MCF 10A (cell line): ENCODE measurements at regions of chr1 and their contacts with region 1.

Region 1: GRCh38 chr1:225474986-225475820 is 47.4 kb upstream of the LBR start:
- DNase-seq: peak; percentile 85
- H3K4me3 Mint-ChIP-seq: no peak overlapping the region
- H3K27ac Mint-ChIP-seq: no peak overlapping the region
- H3K4me1 Mint-ChIP-seq: no peaks in the 10 kb centered on the region
- H3K27me3 Mint-ChIP-seq: no peaks in the 10 kb centered on the region
- CTCF ChIP-seq: peak; percentile 100

Region 2: GRCh38 chr1:225454733-225455132 is 20.5 kb before region 1 on chr1:
- CTCF ChIA-PET with region 1: interaction called, 78 read pairs
- POLR2A ChIA-PET with region 1: interaction called, 11 read pairs
- intact Hi-C with region 1: no loop called
- DNase-seq: peak; percentile 96
- H3K4me3 Mint-ChIP-seq: peak overlapping the region; percentile 2
- H3K27ac Mint-ChIP-seq: peak overlapping the region; percentile 60
- H3K4me1 Mint-ChIP-seq: peaks cover 61% of the 10 kb centered on the region
- H3K27me3 Mint-ChIP-seq: no peaks in the 10 kb centered on the region
- CTCF ChIP-seq: no peak

Region 3: DNA sequence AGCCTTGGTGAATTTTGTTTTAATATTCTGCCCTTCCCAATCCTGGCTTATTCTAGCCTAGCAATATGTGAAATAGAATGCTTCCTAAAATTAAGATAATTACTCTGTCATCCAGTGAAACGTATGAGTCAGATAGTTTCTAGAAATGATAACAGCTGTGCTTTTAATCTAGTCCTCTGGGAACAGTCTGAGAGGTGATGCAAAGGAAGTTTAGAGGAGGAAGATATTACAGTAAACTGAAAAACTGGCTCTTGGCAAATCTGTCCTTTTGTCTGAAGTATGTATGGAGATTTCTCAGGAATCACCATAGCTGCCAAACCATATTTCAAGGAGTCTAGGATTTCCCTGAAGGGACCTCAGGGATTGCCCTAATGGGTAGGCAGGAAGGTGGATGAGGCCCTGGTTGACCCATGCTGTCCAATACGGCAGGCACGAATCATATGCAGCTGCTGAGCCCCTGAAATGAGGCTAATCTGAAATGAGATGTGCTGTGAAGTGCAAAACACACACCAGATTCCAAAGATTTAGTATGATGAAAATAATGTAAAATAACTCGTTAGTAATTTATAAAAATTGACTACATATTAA is 23.4 kb after region 1 on chr1:
- CTCF ChIA-PET with region 1: interaction called, 37 read pairs
- POLR2A ChIA-PET with region 1: interaction called, 4 read pairs
- intact Hi-C with region 1: no loop called
- DNase-seq: no peak
- H3K4me3 Mint-ChIP-seq: no peak overlapping the region
- H3K27ac Mint-ChIP-seq: no peak overlapping the region
- H3K4me1 Mint-ChIP-seq: no peaks in the 10 kb centered on the region
- H3K27me3 Mint-ChIP-seq: no peaks in the 10 kb centered on the region
- CTCF ChIP-seq: no peak

Region 4: DNA sequence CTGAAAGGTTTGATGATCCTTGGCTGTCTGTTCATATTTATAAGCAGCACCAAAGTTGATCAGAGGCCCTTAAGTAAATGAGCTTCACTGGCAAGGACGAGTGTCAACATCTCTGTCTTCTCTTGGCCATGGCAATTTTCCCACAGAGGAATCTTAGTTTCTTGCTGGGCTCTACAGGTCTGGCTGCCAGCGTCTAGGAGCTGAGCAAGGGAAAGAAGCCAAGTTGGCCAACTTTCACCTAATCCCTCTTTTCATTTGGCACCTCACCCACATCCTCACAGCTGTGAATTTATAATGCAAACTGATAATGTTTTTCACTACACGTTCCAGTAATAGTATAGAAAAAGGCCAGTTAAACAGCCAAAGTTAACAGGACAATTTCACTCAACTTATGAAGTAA is 51.7 kb after region 1 on chr1:
- CTCF ChIA-PET with region 1: interaction called, 11 read pairs
- POLR2A ChIA-PET with region 1: no interaction called
- intact Hi-C with region 1: no loop called
- DNase-seq: peak; percentile 56
- H3K4me3 Mint-ChIP-seq: no peak overlapping the region
- H3K27ac Mint-ChIP-seq: no peak overlapping the region
- H3K4me1 Mint-ChIP-seq: peaks cover 5% of the 10 kb centered on the region
- H3K27me3 Mint-ChIP-seq: no peaks in the 10 kb centered on the region
- CTCF ChIP-seq: no peak

Region 5: GRCh38 chr1:225825607-225826007 is 350.4 kb after region 1 on chr1:
- CTCF ChIA-PET with region 1: interaction called, 12 read pairs
- POLR2A ChIA-PET with region 1: no interaction called
- intact Hi-C with region 1: no loop called
- DNase-seq: no peak
- H3K4me3 Mint-ChIP-seq: no peak overlapping the region
- H3K27ac Mint-ChIP-seq: peak overlapping the region; percentile 3
- H3K4me1 Mint-ChIP-seq: peaks cover 21% of the 10 kb centered on the region
- H3K27me3 Mint-ChIP-seq: no peaks in the 10 kb centered on the region
- CTCF ChIP-seq: no peak

Region 6: GRCh38 chr1:225881969-225882693 is 406.9 kb after region 1 on chr1 and contains the start of gene TMEM63A:
- CTCF ChIA-PET with region 1: interaction called, 15 read pairs
- POLR2A ChIA-PET with region 1: interaction called, 3 read pairs
- intact Hi-C with region 1: no loop called
- DNase-seq: peak; percentile 92
- H3K4me3 Mint-ChIP-seq: peak within 1 kb of the TSS; percentile 91
- H3K27ac Mint-ChIP-seq: peak within 1 kb of the TSS; percentile 82
- H3K4me1 Mint-ChIP-seq: peaks cover 51% of the 10 kb centered on the region
- H3K27me3 Mint-ChIP-seq: no peaks in the 10 kb centered on the region
- CTCF ChIP-seq: peak; percentile 25
- total RNA-seq, gene TMEM63A: 52.1 and 71.2 TPM in 2 replicates

Region 7: DNA sequence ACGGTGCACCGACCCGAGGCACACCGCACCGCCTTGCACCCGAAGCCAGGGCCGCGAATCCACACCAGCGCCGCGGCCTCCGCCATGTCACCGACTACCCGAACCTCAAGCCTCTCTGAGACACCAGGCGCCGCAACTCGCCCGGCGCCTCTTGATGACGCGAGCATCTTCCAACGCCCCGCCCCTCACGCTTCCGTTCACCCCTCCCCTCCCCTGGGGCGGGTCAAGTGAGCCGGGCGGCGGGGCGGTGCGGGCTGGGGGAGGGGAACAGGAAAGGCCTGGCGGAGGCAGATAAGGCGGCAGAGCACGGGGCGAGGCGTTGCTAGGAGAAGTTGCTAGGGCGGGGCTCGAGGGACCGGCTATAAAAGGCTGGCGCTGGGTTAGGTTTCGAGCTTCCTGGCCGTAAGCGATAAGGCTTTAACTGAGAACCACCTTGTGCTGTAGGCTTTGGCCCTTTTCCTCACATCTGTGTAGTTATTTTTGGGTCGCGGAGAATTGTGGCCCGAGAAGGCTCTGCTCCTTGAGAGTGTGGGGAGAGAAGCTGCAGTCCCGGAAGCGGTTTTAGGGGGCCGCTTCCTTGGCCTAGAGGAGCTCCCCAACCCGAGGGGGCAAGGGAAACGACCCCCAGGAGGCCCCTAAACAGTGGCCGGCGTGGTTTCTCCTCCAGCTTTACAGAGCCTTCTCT is 524.2 kb after region 1 on chr1 and contains the start of gene SDE2:
- CTCF ChIA-PET with region 1: interaction called, 40 read pairs
- POLR2A ChIA-PET with region 1: no interaction called
- intact Hi-C with region 1: no loop called
- DNase-seq: peak; percentile 100
- H3K4me3 Mint-ChIP-seq: peak within 1 kb of the TSS; percentile 88
- H3K27ac Mint-ChIP-seq: peak within 1 kb of the TSS; percentile 99
- H3K4me1 Mint-ChIP-seq: peaks cover 33% of the 10 kb centered on the region
- H3K27me3 Mint-ChIP-seq: no peaks in the 10 kb centered on the region
- CTCF ChIP-seq: no peak
- total RNA-seq, gene SDE2: 59.3 and 61.8 TPM in 2 replicates